Mammary epithelial cell (primary cell): ENCODE measurements at regions of chr18 and their contacts with region 1.

Region 1: GRCh38 chr18:22169007-22169864 is at the start of gene GATA6:
- DNase-seq: peak; percentile 85
- H3K4me3 ChIP-seq: peak within 1 kb of the TSS; percentile 67 to 93 (median 83)
- H3K27ac ChIP-seq: peak within 1 kb of the TSS; percentile 63
- H3K4me1 ChIP-seq: peaks cover 18% of the 10 kb centered on the region
- H3K27me3 ChIP-seq: peaks cover 41% of the 10 kb centered on the region
- CTCF ChIP-seq: peak; percentile 34 to 69
- total RNA-seq, gene GATA6: 1.0 to 3.6 TPM

Region 2: GRCh38 chr18:21897811-21898210 is 271.4 kb before region 1 on chr18:
- CTCF ChIA-PET with region 1: no interaction called
- dilution Hi-C with region 1: no loop called
- in situ Hi-C with region 1: no loop called
- intact Hi-C with region 1: loop called (anchors 5 kb)
- DNase-seq: peak; percentile 39
- H3K4me3 ChIP-seq: no peak overlapping the region
- H3K27ac ChIP-seq: no peak overlapping the region
- H3K4me1 ChIP-seq: no peaks in the 10 kb centered on the region
- H3K27me3 ChIP-seq: no peaks in the 10 kb centered on the region
- CTCF ChIP-seq: peak; percentile 86 to 90

Region 3: DNA sequence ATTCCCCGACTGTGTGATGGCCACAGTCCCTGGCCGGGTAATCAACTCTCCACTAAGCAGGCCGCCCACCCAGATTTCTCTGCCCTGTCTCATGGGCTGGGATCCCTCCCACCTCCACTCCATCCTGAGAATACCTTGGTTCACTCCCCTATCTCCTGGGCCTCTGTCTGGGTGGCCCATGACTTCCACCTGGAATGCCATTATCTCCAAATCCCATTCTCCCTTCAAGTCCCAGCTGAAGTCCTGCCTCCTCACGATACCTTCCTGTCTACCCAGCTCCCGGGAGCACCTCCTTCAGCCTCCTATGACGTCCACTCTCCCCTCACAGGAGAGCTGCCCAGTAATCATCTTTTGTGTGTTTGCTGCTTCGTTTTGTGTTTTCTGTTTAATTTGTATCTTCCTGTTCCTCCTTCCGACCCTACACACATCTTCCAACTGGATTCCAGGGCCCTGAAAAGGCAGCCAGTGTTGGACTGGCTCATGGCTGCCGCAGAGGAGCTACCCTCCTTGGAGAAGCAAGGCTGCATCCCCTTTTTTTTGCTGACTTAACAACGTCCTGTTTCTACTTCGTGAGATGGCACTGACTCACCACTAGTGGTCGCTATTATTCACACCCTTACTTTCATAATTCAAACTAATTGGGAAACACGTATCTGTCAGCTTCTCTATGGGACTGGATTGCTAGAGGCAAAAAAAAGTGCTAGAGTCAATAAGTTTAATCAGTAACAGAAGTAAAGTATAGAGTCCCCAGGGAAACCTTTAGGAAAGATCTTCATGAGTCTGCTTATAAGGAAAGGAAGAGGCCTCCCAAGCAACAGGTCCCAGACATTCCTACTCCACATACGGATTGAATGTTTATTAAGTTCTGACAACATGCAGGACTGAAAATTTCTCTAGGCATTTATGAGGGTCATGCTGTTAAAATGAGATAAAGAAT is 171.8 kb before region 1 on chr18:
- CTCF ChIA-PET with region 1: no interaction called
- dilution Hi-C with region 1: no loop called
- in situ Hi-C with region 1: no loop called
- intact Hi-C with region 1: loop called (anchors 2 kb)
- DNase-seq: peak; percentile 32
- H3K4me3 ChIP-seq: no peak overlapping the region
- H3K27ac ChIP-seq: no peak overlapping the region
- H3K4me1 ChIP-seq: no peaks in the 10 kb centered on the region
- H3K27me3 ChIP-seq: no peaks in the 10 kb centered on the region
- CTCF ChIP-seq: peak; percentile 82 to 96

Region 4: GRCh38 chr18:22238036-22238435 is 68.8 kb after region 1 on chr18:
- CTCF ChIA-PET with region 1: no interaction called
- dilution Hi-C with region 1: no loop called
- in situ Hi-C with region 1: no loop called
- intact Hi-C with region 1: no loop called
- DNase-seq: no peak
- H3K4me3 ChIP-seq: no peak overlapping the region
- H3K27ac ChIP-seq: no peak overlapping the region
- H3K4me1 ChIP-seq: no peaks in the 10 kb centered on the region
- H3K27me3 ChIP-seq: peaks cover 2% of the 10 kb centered on the region
- CTCF ChIP-seq: no peak

Region 5: GRCh38 chr18:22324191-22325131 is 155.2 kb after region 1 on chr18:
- CTCF ChIA-PET with region 1: no interaction called
- dilution Hi-C with region 1: no loop called
- in situ Hi-C with region 1: no loop called
- intact Hi-C with region 1: loop called (anchors 5 kb)
- DNase-seq: no peak
- H3K4me3 ChIP-seq: peak overlapping the region in 2 of 3 experiments; percentile 15 to 32
- H3K27ac ChIP-seq: no peak overlapping the region
- H3K4me1 ChIP-seq: peaks cover 5% of the 10 kb centered on the region
- H3K27me3 ChIP-seq: no peaks in the 10 kb centered on the region
- CTCF ChIP-seq: peak; percentile 19 to 50

Region 6: GRCh38 chr18:22363867-22364463 is 194.7 kb after region 1 on chr18:
- CTCF ChIA-PET with region 1: no interaction called
- dilution Hi-C with region 1: no loop called
- in situ Hi-C with region 1: no loop called
- intact Hi-C with region 1: loop called (anchors 10 kb)
- DNase-seq: no peak
- H3K4me3 ChIP-seq: no peak overlapping the region
- H3K27ac ChIP-seq: no peak overlapping the region
- H3K4me1 ChIP-seq: no peaks in the 10 kb centered on the region
- H3K27me3 ChIP-seq: peaks cover 7% of the 10 kb centered on the region
- CTCF ChIP-seq: peak; percentile 27 to 49

Region 7: GRCh38 chr18:22465859-22466457 is 296.7 kb after region 1 on chr18:
- CTCF ChIA-PET with region 1: no interaction called
- dilution Hi-C with region 1: no loop called
- in situ Hi-C with region 1: no loop called
- intact Hi-C with region 1: loop called (anchors 2 kb)
- DNase-seq: peak; percentile 98
- H3K4me3 ChIP-seq: no peak overlapping the region
- H3K27ac ChIP-seq: peak overlapping the region; percentile 99
- H3K4me1 ChIP-seq: peaks cover 22% of the 10 kb centered on the region
- H3K27me3 ChIP-seq: no peaks in the 10 kb centered on the region
- CTCF ChIP-seq: no peak

Region 8: DNA sequence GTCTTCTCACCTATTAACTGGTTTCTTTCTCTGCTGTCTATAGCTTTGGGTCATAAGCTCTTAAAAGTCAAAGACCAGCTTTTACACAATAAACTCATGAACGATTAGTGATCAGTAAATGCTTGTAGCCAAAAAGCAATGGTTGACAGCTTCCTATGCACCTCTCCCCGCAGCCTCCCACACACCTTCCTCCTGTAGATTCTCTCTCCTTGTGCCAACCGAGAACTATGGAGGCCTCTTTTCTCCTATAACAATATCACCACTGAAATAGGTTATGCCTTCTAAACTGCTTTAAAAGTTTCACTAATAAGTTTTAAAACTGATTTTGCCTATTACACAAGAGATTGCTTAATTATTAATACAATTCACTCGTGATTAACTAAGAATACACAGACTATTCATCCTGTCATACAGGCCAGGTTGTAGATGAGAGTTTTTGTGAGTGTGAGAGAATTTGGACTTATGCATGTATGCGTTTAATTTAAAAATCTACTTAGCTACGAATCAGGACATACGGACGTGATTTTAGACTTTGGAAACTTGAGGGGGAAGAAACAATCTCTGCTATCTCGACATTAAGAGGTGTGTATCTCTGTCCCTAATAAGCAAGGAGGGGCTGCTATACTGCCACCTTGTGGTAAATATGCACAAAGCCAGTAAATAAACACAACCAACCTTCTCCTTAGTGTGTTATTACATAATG is 534.8 kb after region 1 on chr18:
- CTCF ChIA-PET with region 1: no interaction called
- dilution Hi-C with region 1: no loop called
- in situ Hi-C with region 1: no loop called
- intact Hi-C with region 1: loop called (anchors 2 kb)
- DNase-seq: peak; percentile 43
- H3K4me3 ChIP-seq: no peak overlapping the region
- H3K27ac ChIP-seq: no peak overlapping the region
- H3K4me1 ChIP-seq: peaks cover 3% of the 10 kb centered on the region
- H3K27me3 ChIP-seq: no peaks in the 10 kb centered on the region
- CTCF ChIP-seq: peak; percentile 74 to 78